Activated B cell treated with CpG ODN at 0.5 μM for 24 hours (primary cell): ENCODE measurements at regions of chr15 and their contacts with region 1.

Region 1: GRCh38 chr15:66369773-66370651 is 13.5 kb upstream of the TIPIN start:
- DNase-seq: no peak
- ATAC-seq: peak; percentile 78
- H3K4me3 Mint-ChIP-seq: peak overlapping the region; percentile 80
- H3K27ac Mint-ChIP-seq: peak overlapping the region; percentile 89
- H3K4me1 Mint-ChIP-seq: peaks cover 13% of the 10 kb centered on the region
- H3K27me3 Mint-ChIP-seq: no peaks in the 10 kb centered on the region
- CTCF ChIP-seq: no peak

Region 2: DNA sequence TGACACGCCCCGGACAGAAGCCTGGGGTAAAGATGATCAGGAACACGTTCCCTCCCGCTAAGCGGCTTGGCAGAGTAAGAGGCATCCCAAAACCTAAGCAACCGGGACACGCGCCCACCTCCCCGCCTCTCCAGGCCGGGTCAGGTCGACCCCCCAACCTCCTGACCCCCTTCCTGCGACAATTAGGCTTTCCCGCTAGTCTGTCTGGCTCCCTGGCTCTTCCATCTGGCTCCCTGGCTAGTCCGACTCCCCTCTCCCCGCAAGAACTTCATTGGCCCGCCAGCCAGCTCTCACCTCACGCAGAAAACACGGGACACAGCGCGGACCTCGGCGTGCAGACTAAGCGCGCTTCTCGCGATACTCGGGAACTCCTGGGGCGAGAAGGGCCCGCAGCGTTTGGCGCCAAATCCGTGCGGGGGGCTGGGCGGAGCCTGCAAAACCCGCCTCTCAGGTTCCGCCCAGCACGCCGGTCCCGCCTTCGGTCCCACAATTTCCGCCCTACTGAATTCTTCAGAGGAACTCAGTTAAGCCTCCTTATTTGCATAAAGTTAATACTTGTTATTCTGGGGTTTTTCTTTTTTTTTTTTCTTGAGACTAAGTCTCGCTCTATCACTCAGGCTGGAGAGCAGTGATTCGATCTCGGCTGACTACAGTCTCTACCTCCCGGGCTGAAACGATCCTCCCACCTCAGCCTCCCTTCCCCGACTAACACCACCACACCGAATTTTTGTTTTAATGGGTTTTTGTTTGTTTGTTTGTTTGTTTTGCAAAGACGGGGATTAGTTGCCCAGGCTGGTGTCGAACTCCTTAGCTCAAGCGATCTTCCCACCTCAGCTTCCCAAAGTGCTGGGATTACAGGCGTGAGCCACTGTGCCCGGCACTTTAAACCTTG is 13.4 kb before region 1 on chr15 and contains the start of gene TIPIN:
- CTCF ChIA-PET with region 1: interaction called, 3 read pairs
- POLR2A ChIA-PET with region 1: interaction called, 5 read pairs
- intact Hi-C with region 1: loop called (anchors 1 kb)
- DNase-seq: peak; percentile 92
- ATAC-seq: peak; percentile 94
- H3K4me3 Mint-ChIP-seq: peak within 1 kb of the TSS; percentile 98
- H3K27ac Mint-ChIP-seq: peak within 1 kb of the TSS; percentile 95
- H3K4me1 Mint-ChIP-seq: peaks cover 24% of the 10 kb centered on the region
- H3K27me3 Mint-ChIP-seq: no peaks in the 10 kb centered on the region
- CTCF ChIP-seq: no peak
- total RNA-seq, gene TIPIN: 10.8 and 11.5 TPM in 2 replicates